ENCODE measurements at regions of chr17 and their contacts with region 1.

Region 1: GRCh38 chr17:4340914-4341615 is 25.4 kb downstream of the UBE2G1 start:
- DNase-seq: no peak
- ATAC-seq: peak; percentile 54
- H3K4me3 Mint-ChIP-seq: no peak overlapping the region
- H3K27ac Mint-ChIP-seq: peak overlapping the region; percentile 15
- H3K4me1 Mint-ChIP-seq: peaks cover 45% of the 10 kb centered on the region
- H3K27me3 Mint-ChIP-seq: no peaks in the 10 kb centered on the region
- CTCF ChIP-seq: no peak

Region 2: DNA sequence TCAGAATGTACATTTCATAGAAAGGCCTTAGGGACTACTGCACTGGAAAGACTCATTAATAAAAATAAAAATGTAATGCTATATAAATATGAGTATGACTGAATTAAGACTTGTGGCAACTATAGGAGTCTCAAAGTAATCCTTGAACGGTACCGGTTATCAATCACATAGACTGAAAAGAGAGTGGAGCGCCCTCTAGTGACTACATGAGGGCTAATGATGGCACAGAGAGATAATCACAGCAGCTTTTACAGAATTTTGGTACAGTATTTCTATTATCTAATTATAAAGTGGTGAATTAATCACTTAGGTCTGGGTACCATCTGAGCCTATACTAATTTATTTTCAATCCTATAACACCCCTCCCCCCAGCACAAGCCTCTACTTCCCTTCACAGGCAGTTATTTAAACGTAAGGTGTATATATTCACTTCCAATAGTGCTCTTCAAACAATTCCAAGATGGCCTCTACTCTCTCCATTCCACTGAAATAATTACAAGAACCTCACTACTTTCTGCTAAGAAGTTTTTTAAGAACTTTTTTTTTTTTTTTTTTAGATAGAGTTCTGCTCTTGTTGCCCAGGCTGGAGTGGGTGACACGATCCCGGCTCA is 36.5 kb before region 1 on chr17:
- CTCF ChIA-PET with region 1: interaction called, 3 read pairs
- POLR2A ChIA-PET with region 1: no interaction called
- intact Hi-C with region 1: loop called (anchors 5 kb)
- DNase-seq: no peak
- ATAC-seq: peak; percentile 81
- H3K4me3 Mint-ChIP-seq: no peak overlapping the region
- H3K27ac Mint-ChIP-seq: no peak overlapping the region
- H3K4me1 Mint-ChIP-seq: peaks cover 20% of the 10 kb centered on the region
- H3K27me3 Mint-ChIP-seq: no peaks in the 10 kb centered on the region
- CTCF ChIP-seq: peak; percentile 53

Region 3: GRCh38 chr17:4444782-4445473 is 103.9 kb after region 1 on chr17:
- CTCF ChIA-PET with region 1: no interaction called
- POLR2A ChIA-PET with region 1: no interaction called
- intact Hi-C with region 1: no loop called
- DNase-seq: no peak
- ATAC-seq: no peak
- H3K4me3 Mint-ChIP-seq: no peak overlapping the region
- H3K27ac Mint-ChIP-seq: no peak overlapping the region
- H3K4me1 Mint-ChIP-seq: peaks cover 2% of the 10 kb centered on the region
- H3K27me3 Mint-ChIP-seq: peaks cover 2% of the 10 kb centered on the region
- CTCF ChIP-seq: no peak